Activated CD4-positive, alpha-beta memory T cell treated with anti-CD3 and anti-CD28 coated beads for 36 hours (primary cell): ENCODE measurements at regions of chr1 and their contacts with region 1.

Region 1: DNA sequence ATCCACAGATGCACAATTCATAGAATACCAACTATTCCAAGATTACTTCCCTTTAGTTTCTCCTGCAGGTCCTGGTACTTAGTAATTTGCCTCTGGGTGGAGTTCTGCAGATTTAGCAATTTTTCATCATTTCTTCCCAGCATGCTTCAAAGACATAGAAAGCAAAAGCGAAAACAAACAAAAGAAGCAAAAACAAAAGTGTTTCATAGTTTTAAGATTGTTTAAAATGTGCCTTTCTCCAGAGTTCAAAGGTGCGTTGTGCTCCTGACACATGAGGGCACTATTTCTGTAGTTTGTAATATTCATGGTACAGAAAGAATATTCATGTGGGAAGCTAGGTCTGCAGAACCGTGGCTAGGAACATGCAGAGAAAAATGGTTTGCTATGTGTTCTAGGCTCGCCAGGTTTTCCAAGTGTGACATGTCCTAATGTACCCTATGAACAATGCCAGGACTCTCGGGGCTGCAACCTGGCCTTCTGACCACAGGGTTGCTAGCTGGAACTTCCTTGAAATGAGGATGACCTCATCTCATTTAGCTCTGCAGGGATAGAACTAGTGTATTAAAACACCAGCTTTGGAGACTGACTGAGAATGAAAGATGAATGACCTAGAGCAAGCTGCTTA is 30.0 kb upstream of the RCSD1 start:
- DNase-seq: peak; percentile 53
- H3K4me3 Mint-ChIP-seq: peak overlapping the region; percentile 61
- H3K27ac Mint-ChIP-seq: peak overlapping the region; percentile 64
- H3K4me1 Mint-ChIP-seq: peaks cover 37% of the 10 kb centered on the region
- H3K27me3 Mint-ChIP-seq: no peaks in the 10 kb centered on the region

Region 2: GRCh38 chr1:167617153-167618147 is 17.4 kb after region 1 on chr1:
- CTCF ChIA-PET with region 1: interaction called, 17 read pairs
- POLR2A ChIA-PET with region 1: no interaction called
- intact Hi-C with region 1: no loop called
- DNase-seq: peak; percentile 48
- H3K4me3 Mint-ChIP-seq: peak overlapping the region; percentile 69
- H3K27ac Mint-ChIP-seq: peak overlapping the region; percentile 87
- H3K4me1 Mint-ChIP-seq: peaks cover 52% of the 10 kb centered on the region
- H3K27me3 Mint-ChIP-seq: no peaks in the 10 kb centered on the region

Region 3: GRCh38 chr1:167641786-167642500 is 41.9 kb after region 1 on chr1:
- CTCF ChIA-PET with region 1: interaction called, 98 read pairs
- POLR2A ChIA-PET with region 1: interaction called, 8 read pairs
- intact Hi-C with region 1: loop called (anchors 1 kb)
- DNase-seq: peak; percentile 20
- H3K4me3 Mint-ChIP-seq: peak overlapping the region; percentile 0
- H3K27ac Mint-ChIP-seq: peak overlapping the region; percentile 85
- H3K4me1 Mint-ChIP-seq: peaks cover 84% of the 10 kb centered on the region
- H3K27me3 Mint-ChIP-seq: no peaks in the 10 kb centered on the region

Region 4: GRCh38 chr1:167676205-167676915 is 76.3 kb after region 1 on chr1:
- CTCF ChIA-PET with region 1: interaction called, 26 read pairs
- POLR2A ChIA-PET with region 1: no interaction called
- intact Hi-C with region 1: no loop called
- DNase-seq: peak; percentile 52
- H3K4me3 Mint-ChIP-seq: no peak overlapping the region
- H3K27ac Mint-ChIP-seq: peak overlapping the region; percentile 67
- H3K4me1 Mint-ChIP-seq: peaks cover 45% of the 10 kb centered on the region
- H3K27me3 Mint-ChIP-seq: no peaks in the 10 kb centered on the region

Region 5: DNA sequence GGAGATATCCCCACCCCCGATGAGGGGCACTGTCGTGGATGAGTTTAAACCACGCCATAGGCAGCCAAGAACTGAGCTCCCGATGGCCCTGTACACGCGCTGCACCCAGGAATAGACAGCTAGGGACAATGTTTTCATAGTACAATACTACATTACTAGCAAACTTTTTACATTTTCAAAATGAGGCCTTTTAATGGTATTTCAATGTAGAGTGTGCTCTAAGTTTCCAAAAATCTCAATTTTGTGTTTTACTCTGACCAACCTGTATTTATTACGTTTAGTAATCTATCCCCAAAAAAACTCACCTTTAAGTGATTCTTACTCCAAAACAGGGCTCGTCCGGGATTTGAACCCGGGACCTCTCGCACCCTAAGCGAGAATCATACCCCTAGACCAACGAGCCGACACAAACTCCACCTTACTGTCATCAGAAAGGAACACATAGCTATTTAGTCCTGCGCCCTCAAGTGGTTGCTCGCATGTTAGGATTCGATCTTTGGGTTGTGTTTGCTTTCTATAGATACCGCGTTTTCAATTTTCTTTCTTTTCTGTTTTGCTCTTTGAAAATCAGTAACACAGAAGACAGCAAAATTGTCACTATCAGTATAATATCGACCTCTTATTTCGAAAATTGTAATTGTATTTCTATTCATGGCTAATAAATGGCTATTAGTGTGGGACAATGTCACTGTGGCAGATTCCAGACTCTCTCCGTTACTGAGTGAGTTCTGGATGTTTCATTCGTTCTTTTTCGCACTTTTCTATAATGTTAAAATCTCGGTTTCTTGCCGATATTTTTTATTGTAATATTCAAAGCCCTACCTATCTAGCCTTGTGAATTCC is 115.3 kb after region 1 on chr1:
- CTCF ChIA-PET with region 1: interaction called, 17 read pairs
- POLR2A ChIA-PET with region 1: interaction called, 3 read pairs
- intact Hi-C with region 1: loop called (anchors 1 kb)
- DNase-seq: peak; percentile 93
- H3K4me3 Mint-ChIP-seq: peak overlapping the region; percentile 80
- H3K27ac Mint-ChIP-seq: peak overlapping the region; percentile 93
- H3K4me1 Mint-ChIP-seq: peaks cover 35% of the 10 kb centered on the region
- H3K27me3 Mint-ChIP-seq: peaks cover 7% of the 10 kb centered on the region

Region 6: GRCh38 chr1:167812972-167813371 is 212.9 kb after region 1 on chr1:
- CTCF ChIA-PET with region 1: no interaction called
- POLR2A ChIA-PET with region 1: no interaction called
- intact Hi-C with region 1: no loop called
- DNase-seq: no peak
- H3K4me3 Mint-ChIP-seq: no peak overlapping the region
- H3K27ac Mint-ChIP-seq: no peak overlapping the region
- H3K4me1 Mint-ChIP-seq: peaks cover 3% of the 10 kb centered on the region
- H3K27me3 Mint-ChIP-seq: peaks cover 3% of the 10 kb centered on the region

Region 7: GRCh38 chr1:168082008-168082876 is 482.2 kb after region 1 on chr1:
- CTCF ChIA-PET with region 1: interaction called, 15 read pairs
- POLR2A ChIA-PET with region 1: no interaction called
- intact Hi-C with region 1: loop called (anchors 2 kb)
- DNase-seq: peak; percentile 82
- H3K4me3 Mint-ChIP-seq: no peak overlapping the region
- H3K27ac Mint-ChIP-seq: no peak overlapping the region
- H3K4me1 Mint-ChIP-seq: no peaks in the 10 kb centered on the region
- H3K27me3 Mint-ChIP-seq: no peaks in the 10 kb centered on the region